Dendritic cell treated with granulocyte-macrophage colony-stimulating factor and Interleukin-4, amounts not matched to agents 40 ng/mL and 50 ng/mL, for 4 days (primary cell): ENCODE measurements at regions of chr7 and their contacts with region 1.

Region 1: DNA sequence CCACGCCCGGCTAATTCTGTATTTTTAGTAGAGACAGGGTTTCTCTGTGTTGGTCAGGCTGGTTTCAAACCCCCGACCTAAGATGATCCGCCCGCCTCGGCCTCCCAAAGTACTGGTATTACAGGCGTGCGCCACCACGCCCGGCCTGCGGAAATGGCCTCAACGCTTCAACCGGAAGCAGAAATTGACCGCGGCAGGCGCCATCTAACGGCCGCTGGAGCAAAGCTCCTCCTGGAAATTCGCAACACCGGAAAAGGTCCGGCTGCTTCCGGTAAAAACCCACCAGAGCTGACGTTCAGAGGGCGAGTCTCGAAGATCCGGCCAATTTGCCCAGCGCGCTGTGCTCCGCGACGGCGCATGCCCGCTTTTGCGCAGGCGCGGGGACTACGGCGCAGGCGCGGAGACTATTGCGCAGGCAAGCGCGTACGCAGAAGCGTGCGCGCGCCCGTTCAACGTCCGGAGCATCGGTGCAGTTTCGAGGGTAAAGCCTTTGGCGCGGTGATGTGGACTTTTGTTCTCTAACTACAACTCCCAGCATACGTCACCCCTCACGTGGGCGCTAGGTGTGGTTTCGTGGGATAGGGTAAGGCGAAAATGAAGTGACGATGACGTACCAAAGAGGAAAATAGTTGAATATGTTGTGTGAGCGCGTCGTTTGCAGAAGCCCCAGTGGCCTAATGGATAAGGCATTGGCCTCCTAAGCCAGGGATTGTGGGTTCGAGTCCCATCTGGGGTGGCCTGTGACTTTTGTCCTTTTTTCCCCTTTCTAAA is 915 bp upstream of the FMC1 start:
- H3K4me3 Mint-ChIP-seq: peak overlapping the region; percentile 86
- H3K27ac Mint-ChIP-seq: peak overlapping the region; percentile 100
- H3K4me1 Mint-ChIP-seq: peaks cover 24% of the 10 kb centered on the region
- H3K27me3 Mint-ChIP-seq: no peaks in the 10 kb centered on the region

Region 2: DNA sequence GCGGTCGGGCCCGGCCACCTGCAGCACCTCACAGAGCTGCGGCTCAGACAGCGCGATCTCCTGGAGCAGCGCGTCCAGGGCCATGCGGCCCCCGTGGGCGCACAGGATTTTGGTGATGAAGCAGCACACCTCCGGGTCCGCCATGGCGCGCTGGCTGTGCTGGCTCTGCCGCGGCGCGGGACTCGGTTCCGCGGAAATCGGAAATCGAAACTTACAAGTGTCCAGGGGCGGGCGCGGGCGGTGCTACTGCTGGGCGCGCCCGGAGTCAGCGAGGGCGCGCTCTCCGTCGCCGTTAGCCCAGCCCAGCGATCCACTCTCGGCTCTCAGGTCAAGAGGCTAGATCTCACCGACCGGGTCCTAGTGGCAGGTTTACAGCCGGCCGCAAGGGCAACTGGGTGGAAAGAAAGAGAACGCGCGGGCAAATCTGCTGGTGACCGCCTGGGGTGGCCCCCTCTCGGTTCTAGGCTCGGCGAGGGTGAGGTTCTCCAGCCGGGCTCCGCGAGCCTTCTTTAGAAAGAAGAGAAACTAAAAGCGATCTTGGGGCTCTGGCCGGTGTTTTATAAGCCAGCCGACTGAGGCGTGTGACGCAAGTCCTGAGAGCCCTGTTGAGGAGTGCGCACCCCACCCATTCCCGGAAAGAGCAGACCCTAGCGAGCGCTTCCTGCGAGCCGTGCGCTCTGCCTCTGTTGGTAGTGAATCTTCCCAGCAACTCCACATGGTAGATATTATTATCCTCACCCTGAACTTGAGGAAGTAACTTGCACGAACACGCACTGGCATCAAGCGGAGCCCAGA is 230.8 kb before region 1 on chr7 and contains the start of gene ZC3HAV1:
- intact Hi-C with region 1: loop called (anchors 2 kb)
- H3K4me3 Mint-ChIP-seq: peak within 1 kb of the TSS; percentile 90
- H3K27ac Mint-ChIP-seq: peak within 1 kb of the TSS; percentile 89
- H3K4me1 Mint-ChIP-seq: peaks cover 19% of the 10 kb centered on the region
- H3K27me3 Mint-ChIP-seq: no peaks in the 10 kb centered on the region

Region 3: GRCh38 chr7:139230774-139231512 is 109.3 kb before region 1 on chr7 and contains the start of gene UBN2:
- intact Hi-C with region 1: loop called (anchors 2 kb)
- H3K4me3 Mint-ChIP-seq: peak within 1 kb of the TSS; percentile 100
- H3K27ac Mint-ChIP-seq: peak within 1 kb of the TSS; percentile 95
- H3K4me1 Mint-ChIP-seq: peaks cover 17% of the 10 kb centered on the region
- H3K27me3 Mint-ChIP-seq: no peaks in the 10 kb centered on the region

Region 4: DNA sequence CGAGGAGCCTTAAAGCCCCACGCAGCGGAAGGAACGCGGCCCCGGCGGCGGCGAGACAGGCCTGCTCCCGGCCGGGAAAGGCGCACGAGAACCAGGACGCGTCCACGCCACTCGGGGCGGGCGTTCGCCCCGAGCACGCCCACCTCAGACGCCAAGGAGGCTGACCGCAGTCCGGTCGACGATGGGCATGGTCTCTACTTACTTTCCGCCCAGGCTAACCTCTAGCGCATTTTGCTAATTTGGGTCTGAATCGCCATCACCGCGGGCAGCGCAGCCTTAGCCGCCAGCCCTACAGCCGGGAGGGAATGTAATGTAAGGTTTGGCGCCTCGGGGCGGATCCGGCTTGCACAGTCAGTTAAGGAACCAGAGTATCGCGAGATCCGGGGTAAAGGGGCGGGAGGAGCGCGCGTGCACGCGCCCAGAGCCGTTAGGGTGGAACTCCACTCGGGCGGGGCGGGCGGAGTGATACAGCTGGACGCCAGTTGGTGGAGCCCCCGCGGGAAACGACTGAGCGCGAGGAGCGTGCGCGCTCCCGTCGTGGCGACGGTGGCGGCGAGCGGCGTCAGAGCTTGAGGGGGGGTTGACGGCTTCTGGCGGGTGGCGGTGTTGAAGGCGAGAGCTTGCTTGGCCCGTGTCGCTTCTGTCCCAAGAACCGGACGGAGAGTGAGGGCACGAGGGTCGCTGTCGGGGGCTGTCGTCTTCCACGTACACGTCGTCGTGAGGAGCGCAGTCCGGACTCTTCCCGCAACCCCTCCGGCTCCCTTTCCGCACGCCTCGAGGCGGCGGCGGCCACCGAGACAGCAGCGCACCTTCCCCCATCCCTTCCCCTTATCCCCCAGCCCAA is 19.4 kb after region 1 on chr7 and contains the start of gene LUC7L2:
- intact Hi-C with region 1: loop called (anchors 1 kb)
- H3K4me3 Mint-ChIP-seq: peak within 1 kb of the TSS; percentile 86
- H3K27ac Mint-ChIP-seq: peak within 1 kb of the TSS; percentile 98
- H3K4me1 Mint-ChIP-seq: peaks cover 23% of the 10 kb centered on the region
- H3K27me3 Mint-ChIP-seq: no peaks in the 10 kb centered on the region